Common myeloid progenitor, CD34-positive (primary cell): ENCODE measurements at regions of chr6 and their contacts with region 1.

Region 1: DNA sequence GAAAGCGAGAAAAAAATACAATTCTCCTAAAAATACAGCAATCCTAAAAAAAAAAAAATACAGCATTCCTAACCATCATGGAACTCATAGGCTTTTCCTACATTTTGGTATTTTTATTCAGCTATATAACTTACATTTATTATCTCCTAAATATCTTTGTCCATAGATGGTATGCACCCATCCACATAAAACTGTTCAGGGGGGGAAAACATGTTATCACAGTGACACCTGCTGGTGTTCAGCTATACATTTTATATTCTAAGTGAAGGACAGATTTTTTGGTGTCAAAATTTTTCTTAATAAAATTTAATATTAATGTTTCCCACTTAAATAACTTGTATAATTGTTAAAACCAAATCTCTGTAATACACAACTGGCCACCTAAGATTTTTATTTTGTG is 58.0 kb downstream of the BLOC1S5 start:
- DNase-seq: peak; percentile 54 to 71 (median 66)
- H3K4me3 ChIP-seq: no peak overlapping the region
- H3K27ac ChIP-seq: no peak overlapping the region
- H3K4me1 ChIP-seq: no peaks in the 10 kb centered on the region
- H3K27me3 ChIP-seq: no peaks in the 10 kb centered on the region

Region 2: DNA sequence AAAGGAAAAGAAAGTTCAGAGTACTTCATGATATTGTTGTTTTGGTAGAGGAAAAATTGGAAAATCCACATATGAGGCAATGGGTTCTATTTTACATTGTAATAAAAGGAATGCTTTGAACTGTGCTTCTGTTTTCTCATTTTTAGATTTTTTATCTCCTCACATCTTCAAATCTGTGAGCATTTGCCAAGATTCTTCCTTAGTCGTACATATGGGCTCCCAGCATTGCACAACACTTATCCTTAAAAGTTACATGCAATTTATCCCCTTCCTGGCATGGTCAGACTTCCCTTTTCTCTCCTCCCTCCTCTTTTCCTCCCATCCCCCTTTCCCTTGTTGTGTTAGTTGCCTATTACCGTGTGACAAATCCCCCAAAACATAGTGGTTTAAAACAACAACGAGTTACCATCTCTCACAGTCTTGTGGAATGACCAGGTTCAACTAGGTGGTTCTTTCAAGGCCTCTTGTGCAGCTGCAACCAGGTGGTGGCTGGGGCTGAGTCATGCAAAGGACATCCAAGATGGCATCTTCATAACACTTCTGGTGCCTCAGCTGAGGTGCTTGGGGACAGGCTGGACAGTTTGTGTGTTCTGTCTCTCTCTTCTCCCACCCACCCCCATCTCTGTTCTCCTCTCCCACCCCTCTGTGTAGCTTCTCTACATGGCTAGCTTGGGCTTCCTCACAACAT is 164.3 kb before region 1 on chr6:
- CTCF ChIA-PET with region 1: no interaction called
- POLR2A ChIA-PET with region 1: no interaction called
- DNase-seq: no peak
- H3K4me3 ChIP-seq: no peak overlapping the region
- H3K27ac ChIP-seq: no peak overlapping the region
- H3K4me1 ChIP-seq: no peaks in the 10 kb centered on the region
- H3K27me3 ChIP-seq: no peaks in the 10 kb centered on the region

Region 3: GRCh38 chr6:7899101-7899888 is 106.9 kb before region 1 on chr6:
- CTCF ChIA-PET with region 1: interaction called, 13 read pairs
- POLR2A ChIA-PET with region 1: no interaction called
- DNase-seq: peak; percentile 24 to 63 (median 54)
- H3K4me3 ChIP-seq: no peak overlapping the region
- H3K27ac ChIP-seq: no peak overlapping the region
- H3K4me1 ChIP-seq: no peaks in the 10 kb centered on the region
- H3K27me3 ChIP-seq: no peaks in the 10 kb centered on the region